Thyroid gland (tissue), 4 donors: ENCODE measurements at regions of chr9 and their contacts with region 1.

Region 1: DNA sequence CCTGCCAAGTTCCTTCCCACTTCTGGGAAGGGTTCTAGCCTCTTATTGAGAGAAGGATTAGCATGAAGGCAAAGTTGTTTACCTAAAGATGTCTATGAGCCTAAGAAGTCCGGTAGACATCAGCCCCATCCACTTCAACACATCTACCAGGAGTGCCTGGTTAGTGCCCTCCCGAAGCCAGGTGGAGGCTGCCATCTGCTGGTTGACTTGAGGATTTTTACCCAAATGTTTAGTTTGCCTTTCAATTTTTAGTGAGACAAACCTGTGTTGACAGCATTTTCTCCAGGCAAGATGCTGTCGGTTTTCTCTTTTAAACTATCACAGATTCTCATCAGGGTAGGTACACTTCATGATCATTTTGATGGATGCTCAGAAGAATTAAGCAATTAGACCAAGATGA is 83.6 kb upstream of the TNFSF8 start:
- DNase-seq: peak; percentile 63 to 79
- H3K4me3 ChIP-seq: no peak overlapping the region
- H3K27ac ChIP-seq: no peak overlapping the region
- H3K4me1 ChIP-seq: peaks cover 0 to 15% of the 10 kb centered on the region in 2 donors
- H3K27me3 ChIP-seq: no peaks in the 10 kb centered on the region
- CTCF ChIP-seq: peak; percentile 54 to 93 (median 82)
- POLR2A ChIP-seq: no peak

Region 2: DNA sequence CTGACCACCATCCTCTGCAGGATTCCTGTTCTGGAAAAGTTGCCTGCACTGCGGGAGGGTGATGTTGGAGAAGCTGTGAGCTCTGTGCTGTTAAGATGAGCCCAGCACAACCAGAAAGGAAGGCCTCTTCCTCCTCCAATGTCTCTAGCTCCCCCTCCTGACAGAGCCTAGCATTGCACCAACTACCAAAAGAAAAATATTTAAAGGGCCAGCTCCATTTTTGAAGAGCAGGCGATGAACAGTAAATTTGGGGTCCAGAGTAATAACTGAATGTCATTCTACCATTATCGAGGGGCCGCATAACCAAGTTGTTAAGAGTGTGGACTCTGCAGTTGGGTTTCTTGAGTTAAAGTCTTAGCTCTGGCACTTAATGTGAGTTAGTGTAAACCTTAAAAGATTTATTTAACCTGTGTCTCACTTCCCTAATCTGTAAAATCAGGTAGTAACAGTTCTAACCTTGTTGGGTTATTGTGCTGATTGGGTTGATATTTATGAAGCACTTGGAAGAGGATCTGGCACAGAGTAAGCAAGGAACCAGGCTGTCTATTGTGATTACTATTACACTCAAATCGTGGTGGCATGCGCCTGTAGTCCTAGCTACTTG is 360.3 kb before region 1 on chr9:
- intact Hi-C with region 1: loop called (anchors 5 kb)
- DNase-seq: peak; percentile 69 to 78
- H3K4me3 ChIP-seq: no peak overlapping the region
- H3K27ac ChIP-seq: no peak overlapping the region
- H3K4me1 ChIP-seq: peaks cover 0 to 3% of the 10 kb centered on the region in 2 donors
- H3K27me3 ChIP-seq: no peaks in the 10 kb centered on the region
- CTCF ChIP-seq: peak; percentile 53 to 96 (median 90)
- POLR2A ChIP-seq: no peak

Region 3: GRCh38 chr9:114681594-114682332 is 332.2 kb before region 1 on chr9 and contains the start of gene TEX48:
- intact Hi-C with region 1: loop called (anchors 5 kb)
- DNase-seq: peak; percentile 33 to 35
- H3K4me3 ChIP-seq: no peak within 1 kb of the TSS
- H3K27ac ChIP-seq: no peak within 1 kb of the TSS
- H3K4me1 ChIP-seq: peaks cover 11 to 14% of the 10 kb centered on the region in 2 donors
- H3K27me3 ChIP-seq: no peaks in the 10 kb centered on the region
- CTCF ChIP-seq: peak; percentile 19 to 62 (median 36)
- POLR2A ChIP-seq: no peak
- total RNA-seq, gene TEX48: not detected

Region 4: DNA sequence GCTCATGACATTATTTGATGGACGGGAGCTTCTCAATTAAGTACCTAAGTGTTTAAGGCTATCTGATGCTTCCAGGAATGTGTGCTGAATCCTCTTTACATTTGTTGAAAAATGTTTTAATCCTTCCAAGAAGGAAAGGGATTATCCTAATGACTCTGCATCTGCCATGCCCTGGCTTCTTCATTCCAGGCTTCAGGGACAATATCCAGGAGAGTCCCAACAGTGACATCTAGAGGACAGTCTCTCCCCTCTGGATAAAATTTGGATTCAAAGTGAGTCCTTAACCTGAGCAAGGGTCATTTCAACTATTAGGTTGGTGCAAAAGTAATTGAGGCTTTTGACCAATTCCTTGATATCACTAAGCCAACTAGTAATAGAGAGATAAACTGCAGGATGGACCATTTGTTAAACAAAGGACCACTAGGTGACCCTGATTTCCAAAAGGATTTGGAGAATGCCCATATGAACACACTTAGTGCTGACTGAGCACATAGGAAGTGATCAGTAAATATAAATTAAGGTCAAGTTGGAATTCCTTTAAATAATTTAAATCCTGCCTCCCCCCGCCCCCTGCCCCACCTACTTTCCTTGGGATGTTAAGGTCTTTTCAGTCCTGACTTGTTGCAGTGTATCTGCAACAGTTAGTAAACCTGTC is 102.7 kb before region 1 on chr9:
- intact Hi-C with region 1: loop called (anchors 5 kb)
- DNase-seq: peak in 1 of 2 donors; percentile 25
- H3K4me3 ChIP-seq: no peak overlapping the region
- H3K27ac ChIP-seq: peak overlapping the region in 1 of 3 donors; percentile 26
- H3K4me1 ChIP-seq: peaks cover 12 to 44% of the 10 kb centered on the region in 2 donors
- H3K27me3 ChIP-seq: no peaks in the 10 kb centered on the region
- CTCF ChIP-seq: peak; percentile 35 to 84 (median 75)
- POLR2A ChIP-seq: no peak